ENCODE measurements at regions of chr2 and their contacts with region 1.

Region 1: DNA sequence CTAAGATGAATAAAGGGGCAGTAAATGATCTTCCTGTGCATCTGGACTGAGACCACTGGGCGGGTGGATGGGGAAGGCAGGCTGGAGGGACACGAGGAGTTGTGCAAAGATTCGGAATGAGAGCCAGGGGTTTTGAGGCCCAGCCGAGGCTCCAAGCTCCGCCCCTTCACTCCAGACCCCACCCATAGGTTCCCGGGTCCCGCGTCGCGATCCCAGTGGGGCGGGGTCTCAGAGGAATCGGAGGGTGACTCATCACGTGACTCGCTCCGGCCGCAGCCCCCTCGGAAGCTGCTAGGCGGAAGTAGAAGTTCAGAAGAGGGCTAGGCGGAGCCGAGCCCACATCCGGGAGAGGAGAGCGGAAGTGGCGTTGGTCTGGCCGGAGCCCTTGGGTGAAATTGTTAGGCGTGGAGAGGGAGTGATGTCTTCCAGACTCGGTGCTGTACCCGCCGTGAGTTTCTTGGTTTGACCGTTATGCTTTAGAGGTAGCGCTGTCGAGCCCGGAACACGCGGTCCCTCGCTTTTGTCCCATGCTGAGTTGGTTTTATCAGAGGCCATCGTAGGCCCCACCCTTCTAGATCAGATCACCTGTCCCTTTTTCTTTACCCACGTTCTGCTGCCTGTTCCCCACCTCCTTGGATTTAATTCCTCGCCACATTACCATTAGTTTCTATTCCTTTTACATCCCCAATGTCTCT is at the start of gene ZNF512:
- DNase-seq: peak; percentile 89
- ATAC-seq: peak; percentile 97
- H3K4me3 ChIP-seq: peak within 1 kb of the TSS; percentile 94 to 95
- H3K27ac ChIP-seq: peak within 1 kb of the TSS; percentile 58
- H3K4me1 ChIP-seq: peaks cover 0 to 19% of the 10 kb centered on the region in 2 experiments; a peak in 2 of 4 replicates
- H3K27me3 ChIP-seq: no peaks in the 10 kb centered on the region
- CTCF ChIP-seq: no peak
- POLR2A ChIP-seq: peak; percentile 80
- RAD21 ChIP-seq: no peak
- total RNA-seq, gene ZNF512: 33.0 TPM

Region 2: DNA sequence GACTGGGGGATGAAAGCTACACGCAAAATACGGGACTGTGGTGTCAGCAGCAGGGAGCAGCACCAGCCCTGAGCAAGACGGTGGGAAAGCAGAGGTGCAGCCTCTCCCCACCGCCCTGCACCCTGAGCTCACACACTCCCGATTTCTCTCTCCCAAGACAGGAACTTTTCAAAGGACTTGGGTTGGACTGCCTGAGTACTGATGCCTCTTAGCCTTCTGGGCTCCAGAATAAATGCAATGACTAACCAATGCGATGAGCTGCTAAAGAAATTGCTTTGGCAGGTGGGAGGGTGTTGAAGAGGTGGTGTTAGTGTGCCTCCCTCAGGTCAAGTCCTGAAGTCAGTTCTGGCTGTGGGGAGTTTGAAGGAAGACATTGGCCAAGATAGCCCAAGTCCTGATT is 291.0 kb before region 1 on chr2:
- CTCF ChIA-PET with region 1: no interaction called
- POLR2A ChIA-PET with region 1: no interaction called
- RAD21 ChIA-PET with region 1: no interaction called
- intact Hi-C with region 1: no loop called
- DNase-seq: no peak
- ATAC-seq: peak; percentile 67; the same call in 1 of the 2 replicates
- H3K4me3 ChIP-seq: no peak overlapping the region
- H3K27ac ChIP-seq: no peak overlapping the region
- H3K4me1 ChIP-seq: peaks cover 21 to 23% of the 10 kb centered on the region in 2 experiments
- H3K27me3 ChIP-seq: no peaks in the 10 kb centered on the region
- CTCF ChIP-seq: peak; percentile 17 to 37 (median 25); a peak in 4 of 6 replicates
- POLR2A ChIP-seq: no peak
- RAD21 ChIP-seq: peak; percentile 56

Region 3: DNA sequence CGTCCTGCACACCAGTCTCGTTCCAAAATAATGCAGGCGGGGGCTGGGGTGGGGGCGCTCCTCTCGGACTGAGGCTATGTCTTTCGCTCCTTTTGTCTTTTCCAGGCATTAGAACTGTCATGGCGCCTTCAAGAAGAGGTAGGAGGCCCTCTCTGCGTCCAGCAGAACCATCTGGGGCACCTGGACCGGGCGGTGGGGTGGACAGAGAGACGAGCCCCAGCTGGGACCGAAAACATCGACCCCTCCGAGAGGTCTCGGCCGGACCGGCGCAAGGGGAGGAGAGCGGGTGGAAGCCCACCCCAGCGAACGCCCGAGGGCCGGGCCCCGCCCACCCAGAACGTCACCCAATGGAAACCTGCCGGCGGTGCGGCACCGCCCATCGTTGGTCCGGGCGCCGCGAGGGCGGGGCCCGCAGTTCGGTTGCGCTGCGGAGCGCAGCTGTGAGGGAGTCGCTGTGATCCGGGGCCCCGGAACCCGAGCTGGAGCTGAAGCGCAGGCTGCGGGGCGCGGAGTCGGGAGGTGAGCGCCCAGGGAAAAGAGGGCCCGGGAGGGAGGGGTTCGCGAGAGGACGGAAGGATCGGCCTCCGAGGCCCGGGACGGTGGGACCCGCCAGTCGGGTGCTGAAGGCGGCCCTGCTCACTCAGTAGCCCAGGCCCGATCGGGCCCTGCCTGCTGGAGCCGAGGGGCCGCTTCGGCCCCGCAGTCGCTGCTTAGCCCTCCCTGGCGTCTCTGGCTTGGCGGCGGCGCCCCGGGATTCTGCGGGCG is 154.4 kb before region 1 on chr2 and contains the start of gene NRBP1:
- CTCF ChIA-PET with region 1: no interaction called
- POLR2A ChIA-PET with region 1: no interaction called
- RAD21 ChIA-PET with region 1: no interaction called
- intact Hi-C with region 1: loop called (anchors 10 kb)
- DNase-seq: peak; percentile 76
- ATAC-seq: peak; percentile 86
- H3K4me3 ChIP-seq: peak within 1 kb of the TSS; percentile 85 to 92
- H3K27ac ChIP-seq: peak within 1 kb of the TSS; percentile 93
- H3K4me1 ChIP-seq: peaks cover 22 to 36% of the 10 kb centered on the region in 2 experiments
- H3K27me3 ChIP-seq: no peaks in the 10 kb centered on the region
- CTCF ChIP-seq: no peak
- POLR2A ChIP-seq: peak; percentile 62
- RAD21 ChIP-seq: no peak
- total RNA-seq, gene NRBP1: 79.1 TPM